GM13976 (cell line): ENCODE measurements at regions of chr3 and their contacts with region 1.

Region 1: GRCh38 chr3:132006605-132007204 is 28.1 kb downstream of the CPNE4 start:
- DNase-seq: peak; percentile 15
- CTCF ChIP-seq: peak; percentile 45

Region 2: GRCh38 chr3:131026321-131027178 is 980.2 kb before region 1 on chr3 and contains the starts of genes ASTE1 and NEK11:
- in situ Hi-C with region 1: loop called (anchors 25 kb)
- DNase-seq: peak; percentile 92
- CTCF ChIP-seq: no peak

Region 3: GRCh38 chr3:131260525-131260924 is 746.2 kb before region 1 on chr3:
- in situ Hi-C with region 1: no loop called
- DNase-seq: no peak
- CTCF ChIP-seq: no peak

Region 4: GRCh38 chr3:131701153-131701770 is 305.4 kb before region 1 on chr3:
- in situ Hi-C with region 1: no loop called
- DNase-seq: no peak
- CTCF ChIP-seq: no peak